CD4-positive, alpha-beta T cell (primary cell): ENCODE measurements at regions of chr17 and their contacts with region 1.

Region 1: GRCh38 chr17:29369831-29370735 is 20.1 kb upstream of the TAOK1 start:
- DNase-seq: peak; percentile 18 to 81 (median 48)
- ATAC-seq: peak; percentile 96
- H3K4me3 ChIP-seq: no peak overlapping the region
- H3K4me3 Mint-ChIP-seq: no peak overlapping the region
- H3K27ac ChIP-seq: peak overlapping the region in 1 of 2 donors; percentile 18
- H3K27ac Mint-ChIP-seq: no peak overlapping the region
- H3K4me1 ChIP-seq: peaks cover 3% of the 10 kb centered on the region
- H3K4me1 Mint-ChIP-seq: no peaks in the 10 kb centered on the region
- H3K27me3 ChIP-seq: no peaks in the 10 kb centered on the region
- H3K27me3 Mint-ChIP-seq: no peaks in the 10 kb centered on the region
- CTCF ChIP-seq: peak; percentile 80

Region 2: GRCh38 chr17:29241015-29241963 is 128.8 kb before region 1 on chr17:
- CTCF ChIA-PET with region 1: no interaction called
- POLR2A ChIA-PET with region 1: no interaction called
- intact Hi-C with region 1: no loop called
- DNase-seq: peak in 2 of 14 experiments; percentile 40 to 57
- ATAC-seq: no peak
- H3K4me3 ChIP-seq: no peak overlapping the region
- H3K4me3 Mint-ChIP-seq: no peak overlapping the region
- H3K27ac ChIP-seq: no peak overlapping the region
- H3K27ac Mint-ChIP-seq: no peak overlapping the region
- H3K4me1 ChIP-seq: no peaks in the 10 kb centered on the region
- H3K4me1 Mint-ChIP-seq: no peaks in the 10 kb centered on the region
- H3K27me3 ChIP-seq: no peaks in the 10 kb centered on the region
- H3K27me3 Mint-ChIP-seq: no peaks in the 10 kb centered on the region
- CTCF ChIP-seq: no peak

Region 3: GRCh38 chr17:29357821-29358232 is 12.3 kb before region 1 on chr17:
- CTCF ChIA-PET with region 1: interaction called, 11 read pairs
- POLR2A ChIA-PET with region 1: no interaction called
- intact Hi-C with region 1: no loop called
- DNase-seq: no peak
- ATAC-seq: no peak
- H3K4me3 ChIP-seq: no peak overlapping the region
- H3K4me3 Mint-ChIP-seq: no peak overlapping the region
- H3K27ac ChIP-seq: no peak overlapping the region
- H3K27ac Mint-ChIP-seq: no peak overlapping the region
- H3K4me1 ChIP-seq: no peaks in the 10 kb centered on the region
- H3K4me1 Mint-ChIP-seq: no peaks in the 10 kb centered on the region
- H3K27me3 ChIP-seq: no peaks in the 10 kb centered on the region
- H3K27me3 Mint-ChIP-seq: no peaks in the 10 kb centered on the region
- CTCF ChIP-seq: no peak

Region 4: GRCh38 chr17:29384900-29385299 is 14.8 kb after region 1 on chr17:
- CTCF ChIA-PET with region 1: interaction called, 18 read pairs
- POLR2A ChIA-PET with region 1: no interaction called
- intact Hi-C with region 1: no loop called
- DNase-seq: no peak
- ATAC-seq: no peak
- H3K4me3 ChIP-seq: no peak overlapping the region
- H3K4me3 Mint-ChIP-seq: no peak overlapping the region
- H3K27ac ChIP-seq: no peak overlapping the region
- H3K27ac Mint-ChIP-seq: no peak overlapping the region
- H3K4me1 ChIP-seq: peaks cover 3% of the 10 kb centered on the region
- H3K4me1 Mint-ChIP-seq: peaks cover 6% of the 10 kb centered on the region
- H3K27me3 ChIP-seq: no peaks in the 10 kb centered on the region
- H3K27me3 Mint-ChIP-seq: no peaks in the 10 kb centered on the region
- CTCF ChIP-seq: no peak

Region 5: GRCh38 chr17:29533976-29534375 is 163.9 kb after region 1 on chr17:
- CTCF ChIA-PET with region 1: interaction called, 24 read pairs
- POLR2A ChIA-PET with region 1: interaction called, 8 read pairs
- intact Hi-C with region 1: loop called (anchors 1 kb)
- DNase-seq: no peak
- ATAC-seq: no peak
- H3K4me3 ChIP-seq: no peak overlapping the region
- H3K4me3 Mint-ChIP-seq: no peak overlapping the region
- H3K27ac ChIP-seq: no peak overlapping the region
- H3K27ac Mint-ChIP-seq: no peak overlapping the region
- H3K4me1 ChIP-seq: no peaks in the 10 kb centered on the region
- H3K4me1 Mint-ChIP-seq: no peaks in the 10 kb centered on the region
- H3K27me3 ChIP-seq: no peaks in the 10 kb centered on the region
- H3K27me3 Mint-ChIP-seq: no peaks in the 10 kb centered on the region
- CTCF ChIP-seq: no peak